ENCODE measurements at regions of chr20 and their contacts with region 1.

Region 1: GRCh38 chr20:62386383-62387218 is at the start of gene RPS21:
- H3K4me3 ChIP-seq: peak within 1 kb of the TSS; percentile 93
- H3K27ac ChIP-seq: peak within 1 kb of the TSS; percentile 85
- H3K4me1 ChIP-seq: peaks cover 5% of the 10 kb centered on the region; the same call in 1 of the 2 replicates
- CTCF ChIP-seq: peak; percentile 16; the same call in 1 of the 2 replicates

Region 2: DNA sequence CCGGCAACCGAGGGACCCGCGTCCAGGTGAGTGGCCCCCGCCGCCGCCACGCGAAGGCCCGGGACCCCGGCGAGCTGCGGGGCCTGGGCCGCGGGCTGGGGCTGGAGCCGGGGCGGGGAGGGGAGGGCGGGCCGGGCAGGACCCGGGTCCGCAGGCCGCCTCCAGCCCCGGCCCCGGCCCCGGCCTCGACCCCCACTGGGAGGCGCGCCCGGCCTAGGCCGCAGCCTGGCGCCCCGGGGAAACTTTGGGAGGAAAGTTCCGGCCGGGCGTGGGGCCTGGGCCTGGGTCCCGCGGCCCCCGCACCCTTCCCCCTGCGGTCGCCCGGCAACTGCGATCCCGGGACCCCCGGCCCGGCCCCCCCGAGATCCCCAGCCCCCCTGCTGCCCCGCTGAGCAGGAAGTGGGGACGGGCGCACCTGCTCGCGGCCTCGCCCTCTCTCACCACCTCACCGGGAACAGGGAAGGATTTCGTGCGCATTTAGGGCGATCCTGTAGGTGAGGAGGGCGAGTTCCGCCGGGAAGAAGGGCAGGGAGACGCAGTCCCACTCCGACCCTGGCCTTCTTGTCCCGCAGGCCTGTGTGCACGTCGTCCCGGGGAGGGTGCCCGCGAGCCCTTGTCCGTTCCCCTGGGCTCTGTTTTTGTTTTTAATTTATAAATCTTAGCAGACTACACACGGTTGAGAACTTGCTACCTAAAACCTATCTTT is 147.9 kb before region 1 on chr20:
- CTCF ChIA-PET with region 1: no interaction called
- POLR2A ChIA-PET with region 1: no interaction called
- H3K4me3 ChIP-seq: peak overlapping the region; percentile 76
- H3K27ac ChIP-seq: peak overlapping the region; percentile 37; the same call in 1 of the 2 replicates
- H3K4me1 ChIP-seq: peaks cover 6% of the 10 kb centered on the region; the same call in 1 of the 2 replicates
- CTCF ChIP-seq: no peak; the same call in 1 of the 2 replicates

Region 3: DNA sequence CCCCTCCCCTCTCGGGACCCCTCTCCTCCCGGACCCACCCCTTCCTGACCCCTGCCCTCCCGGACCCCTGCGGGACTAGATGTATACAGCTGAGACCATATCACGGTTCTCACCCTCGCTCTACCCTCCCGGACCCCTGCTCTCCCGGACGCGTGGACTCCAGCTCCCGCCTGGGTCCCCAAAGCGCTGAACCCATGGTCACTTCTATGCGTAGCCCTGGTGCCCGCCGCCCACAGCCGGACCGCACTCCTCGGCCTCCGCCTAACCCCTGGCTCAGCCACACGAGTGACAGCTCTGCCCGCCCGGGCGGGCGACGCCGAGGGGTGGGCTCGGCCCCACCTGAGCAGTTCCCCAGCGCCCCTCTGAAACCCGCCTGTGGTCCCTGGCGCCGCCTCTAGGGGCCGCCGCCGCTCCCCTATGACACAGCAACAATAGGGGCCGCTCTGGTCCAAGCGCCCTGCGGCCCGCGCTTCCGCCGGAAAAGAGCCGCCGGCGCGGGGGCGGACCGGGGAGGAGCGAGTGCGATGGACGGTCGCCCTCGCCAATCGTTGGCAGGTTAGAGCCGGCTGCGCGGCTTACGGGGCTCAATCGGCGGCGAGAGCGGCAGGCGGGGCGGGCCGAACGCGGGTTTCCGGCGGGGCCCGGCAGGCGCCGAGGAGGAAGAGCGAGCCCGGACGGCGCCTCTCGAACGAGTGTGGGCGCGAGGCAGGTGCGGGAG is 84.1 kb before region 1 on chr20 and contains the start of gene ADRM1:
- CTCF ChIA-PET with region 1: interaction called, 32 read pairs
- POLR2A ChIA-PET with region 1: interaction called, 13 read pairs
- H3K4me3 ChIP-seq: peak within 1 kb of the TSS; percentile 92
- H3K27ac ChIP-seq: peak within 1 kb of the TSS; percentile 91
- H3K4me1 ChIP-seq: peaks cover 8% of the 10 kb centered on the region
- CTCF ChIP-seq: peak; percentile 98

Region 4: GRCh38 chr20:62362981-62363919 is 23.4 kb before region 1 on chr20:
- CTCF ChIA-PET with region 1: interaction called, 25 read pairs
- POLR2A ChIA-PET with region 1: interaction called, 24 read pairs
- H3K4me3 ChIP-seq: no peak overlapping the region
- H3K27ac ChIP-seq: peak overlapping the region; percentile 22; the same call in 1 of the 2 replicates
- H3K4me1 ChIP-seq: peaks cover 14% of the 10 kb centered on the region
- CTCF ChIP-seq: peak; percentile 78